Activated CD4-positive, alpha-beta T cell treated with anti-CD3 and anti-CD28 coated beads, Interleukin-2, amount 10 ng/mL, durations not matched to agents 24 days and 14 days (primary cell): ENCODE measurements at regions of chr22 and their contacts with region 1.

Region 1: GRCh38 chr22:49992921-49993648 is 19.5 kb downstream of the IL17REL start:
- DNase-seq: peak; percentile 90
- H3K4me3 Mint-ChIP-seq: no peak overlapping the region
- H3K27ac Mint-ChIP-seq: no peak overlapping the region
- H3K4me1 Mint-ChIP-seq: peaks cover 4% of the 10 kb centered on the region
- H3K27me3 Mint-ChIP-seq: peaks cover 8% of the 10 kb centered on the region

Region 2: DNA sequence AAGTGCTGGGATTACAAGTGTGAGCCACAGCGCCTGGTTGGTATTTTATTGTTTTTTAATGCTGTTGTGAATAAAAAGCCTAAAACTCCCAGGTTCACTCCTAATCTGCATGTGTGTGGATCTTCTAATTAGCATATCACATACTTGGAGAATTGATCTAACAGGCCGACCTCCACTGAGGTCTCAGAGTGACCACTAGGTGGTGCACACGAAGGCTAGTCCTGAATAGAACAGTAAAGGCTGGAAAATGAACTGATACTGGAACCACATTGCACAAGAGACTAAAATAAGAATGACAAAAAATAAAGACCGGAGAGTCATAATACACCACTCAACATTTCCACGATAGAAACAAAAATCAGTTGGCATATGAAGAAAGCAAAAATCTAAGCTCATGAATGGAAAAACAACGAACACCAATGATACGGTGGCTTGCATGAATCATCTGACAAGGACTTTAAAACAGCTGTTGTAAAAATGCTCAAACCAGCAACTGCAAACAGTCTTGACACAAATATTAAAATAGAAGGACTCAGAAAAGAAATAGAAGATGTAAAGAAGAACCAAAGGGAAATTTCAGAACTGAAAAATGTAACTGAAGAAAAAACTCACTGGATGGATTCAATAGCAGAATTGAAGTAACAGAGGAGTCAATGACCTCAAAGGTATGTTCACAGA is 13.4 kb before region 1 on chr22:
- intact Hi-C with region 1: loop called (anchors 2 kb)
- DNase-seq: peak; percentile 69
- H3K4me3 Mint-ChIP-seq: peak overlapping the region; percentile 11
- H3K27ac Mint-ChIP-seq: peak overlapping the region; percentile 73
- H3K4me1 Mint-ChIP-seq: peaks cover 29% of the 10 kb centered on the region
- H3K27me3 Mint-ChIP-seq: peaks cover 8% of the 10 kb centered on the region

Region 3: DNA sequence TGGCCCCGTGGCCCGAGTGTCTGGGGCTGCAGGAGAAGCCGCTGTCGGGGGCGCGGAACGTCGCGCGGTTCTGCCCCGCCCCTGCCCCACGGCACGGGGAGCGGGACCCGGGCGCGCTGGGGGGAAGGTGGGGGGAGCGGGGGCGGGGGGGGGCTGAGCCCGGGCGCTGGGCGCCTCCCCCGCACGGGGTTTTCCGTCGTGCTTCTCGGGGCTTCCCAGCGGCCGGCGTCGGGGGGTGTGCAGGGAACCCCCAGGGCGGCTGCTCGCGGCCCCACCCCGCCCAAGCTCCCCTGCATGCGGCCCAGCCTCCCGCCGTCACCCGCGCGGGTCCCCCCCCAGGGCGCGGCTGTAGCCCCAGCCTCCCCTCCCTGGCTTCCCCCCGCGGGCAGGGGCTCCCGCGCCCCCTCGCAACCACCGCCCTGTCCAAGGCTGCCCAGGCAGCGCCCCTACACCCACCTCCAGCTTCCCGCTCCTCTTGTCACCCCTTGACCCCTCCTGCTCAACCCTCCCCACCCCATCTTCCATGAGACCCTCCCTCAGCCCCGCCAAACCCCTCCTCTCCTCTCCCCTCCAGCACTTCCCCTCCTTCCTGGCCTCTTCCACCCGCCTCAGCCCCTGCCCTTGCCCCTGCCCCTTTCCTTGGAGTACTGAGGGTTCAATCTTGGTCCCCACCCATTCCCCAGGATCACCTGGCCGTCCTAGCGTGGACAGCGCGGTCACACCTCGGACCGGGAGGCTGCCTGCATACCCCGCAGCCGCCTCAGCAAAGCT is 17.8 kb after region 1 on chr22:
- intact Hi-C with region 1: no loop called
- DNase-seq: peak; percentile 72
- H3K4me3 Mint-ChIP-seq: peak overlapping the region; percentile 64
- H3K27ac Mint-ChIP-seq: peak overlapping the region; percentile 84
- H3K4me1 Mint-ChIP-seq: peaks cover 9% of the 10 kb centered on the region
- H3K27me3 Mint-ChIP-seq: peaks cover 21% of the 10 kb centered on the region

Region 4: GRCh38 chr22:50030297-50031188 is 37.5 kb after region 1 on chr22:
- intact Hi-C with region 1: loop called (anchors 1 kb)
- DNase-seq: peak; percentile 95
- H3K4me3 Mint-ChIP-seq: no peak overlapping the region
- H3K27ac Mint-ChIP-seq: no peak overlapping the region
- H3K4me1 Mint-ChIP-seq: peaks cover 11% of the 10 kb centered on the region
- H3K27me3 Mint-ChIP-seq: peaks cover 6% of the 10 kb centered on the region